Left lung (tissue), 14 donors: ENCODE measurements at regions of chr1 and their contacts with region 1.

Region 1: DNA sequence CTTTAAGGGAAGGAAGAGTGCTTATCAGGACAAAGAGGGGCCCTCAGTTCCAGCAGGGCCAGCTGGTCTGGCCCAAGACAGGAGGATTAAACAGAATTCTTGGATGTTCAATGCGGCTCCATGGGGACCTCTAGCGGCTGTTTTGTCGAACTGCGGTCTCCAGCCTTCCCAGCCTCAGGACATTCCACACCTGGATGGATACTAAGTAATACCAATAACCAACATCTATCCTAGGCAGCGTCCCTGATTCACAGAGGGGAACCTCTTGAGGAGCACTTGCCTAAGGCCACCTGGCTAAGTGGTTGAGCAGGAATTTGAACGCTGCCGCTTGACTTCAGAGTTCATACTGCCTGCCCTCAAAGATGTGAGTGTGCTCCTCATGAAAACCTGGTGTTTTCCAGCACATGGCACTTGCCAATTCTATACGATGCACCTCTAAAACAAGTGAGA is 15.5 kb upstream of the CD247 start:
- DNase-seq: peak in 3 of 4 donors; percentile 51 to 75 (median 57)
- ATAC-seq: peak; percentile 98
- H3K4me3 ChIP-seq: no peak overlapping the region
- H3K27ac ChIP-seq: no peak overlapping the region
- H3K4me1 ChIP-seq: no peaks in the 10 kb centered on the region
- H3K27me3 ChIP-seq: no peaks in the 10 kb centered on the region
- CTCF ChIP-seq: peak; percentile 88 to 91

Region 2: GRCh38 chr1:166980818-166981217 is 553.1 kb before region 1 on chr1:
- intact Hi-C with region 1: no loop called
- DNase-seq: no peak
- ATAC-seq: no peak
- H3K4me3 ChIP-seq: no peak overlapping the region
- H3K27ac ChIP-seq: no peak overlapping the region
- H3K4me1 ChIP-seq: no peaks in the 10 kb centered on the region
- H3K27me3 ChIP-seq: peaks cover 0 to 21% of the 10 kb centered on the region in 2 donors
- CTCF ChIP-seq: no peak

Region 3: GRCh38 chr1:167076136-167076710 is 457.7 kb before region 1 on chr1:
- intact Hi-C with region 1: loop called in 1 of 2 experiments (anchors 10 kb)
- DNase-seq: no peak
- ATAC-seq: no peak
- H3K4me3 ChIP-seq: no peak overlapping the region
- H3K27ac ChIP-seq: no peak overlapping the region
- H3K4me1 ChIP-seq: no peaks in the 10 kb centered on the region
- H3K27me3 ChIP-seq: peaks cover 0 to 8% of the 10 kb centered on the region in 2 donors
- CTCF ChIP-seq: no peak

Region 4: GRCh38 chr1:167412072-167412471 is 121.8 kb before region 1 on chr1:
- intact Hi-C with region 1: loop called in 1 of 2 experiments (anchors 10 kb)
- DNase-seq: no peak
- ATAC-seq: no peak
- H3K4me3 ChIP-seq: no peak overlapping the region
- H3K27ac ChIP-seq: no peak overlapping the region
- H3K4me1 ChIP-seq: no peaks in the 10 kb centered on the region
- H3K27me3 ChIP-seq: no peaks in the 10 kb centered on the region
- CTCF ChIP-seq: no peak

Region 5: GRCh38 chr1:167467126-167467710 is 66.7 kb before region 1 on chr1:
- intact Hi-C with region 1: no loop called
- DNase-seq: no peak
- ATAC-seq: no peak
- H3K4me3 ChIP-seq: no peak overlapping the region
- H3K27ac ChIP-seq: no peak overlapping the region
- H3K4me1 ChIP-seq: no peaks in the 10 kb centered on the region
- H3K27me3 ChIP-seq: no peaks in the 10 kb centered on the region
- CTCF ChIP-seq: no peak